GM10248 (cell line): ENCODE measurements at regions of chr12 and their contacts with region 1.

Region 1: GRCh38 chr12:54439521-54440255 is 20.6 kb upstream of the ITGA5 start:
- DNase-seq: peak; percentile 70
- CTCF ChIP-seq: peak; percentile 72

Region 2: DNA sequence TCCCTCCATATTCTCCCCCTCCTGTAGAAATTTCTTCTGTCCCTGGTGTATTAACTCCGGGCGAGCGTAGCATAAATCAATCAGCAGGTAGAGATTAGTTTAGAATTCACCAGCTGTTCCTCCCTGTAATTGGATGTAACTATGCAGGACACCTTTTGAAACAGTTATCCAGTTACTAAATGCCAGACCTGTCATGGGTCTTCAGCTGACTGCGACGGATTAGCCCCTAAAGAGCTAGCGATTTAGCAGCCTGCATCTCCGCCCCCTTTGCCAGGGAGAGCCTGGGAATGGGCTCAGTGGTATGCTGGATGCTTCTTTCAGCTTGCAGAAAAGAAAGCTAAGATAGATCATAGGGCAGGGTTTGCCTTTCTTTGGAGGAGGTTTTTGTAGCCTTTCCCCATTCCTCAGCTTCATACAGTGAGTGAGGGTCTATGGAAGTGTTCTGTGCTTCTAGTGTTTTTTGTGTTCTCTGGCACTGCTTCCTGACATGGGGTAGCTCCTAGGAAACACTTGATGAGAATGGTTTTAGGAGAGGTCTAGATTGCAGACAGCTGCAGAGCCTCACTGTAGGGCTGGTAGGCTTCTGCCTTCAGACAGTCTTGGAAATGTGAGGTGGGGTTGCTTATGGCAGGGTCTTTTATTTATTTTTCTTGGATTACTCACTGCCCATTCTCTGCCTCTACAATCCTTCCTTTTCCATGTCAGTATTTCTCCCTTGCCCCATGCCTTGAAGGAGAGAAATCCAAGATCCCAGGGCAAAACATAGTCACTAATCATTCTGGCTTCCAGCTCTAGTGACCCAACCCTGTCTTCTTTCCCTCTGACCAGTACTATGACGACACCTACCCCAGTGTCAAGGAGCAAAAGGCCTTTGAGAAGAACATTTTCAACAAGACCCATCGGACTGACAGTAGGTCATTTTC is 98.0 kb before region 1 on chr12:
- CTCF ChIA-PET with region 1: no interaction called
- POLR2A ChIA-PET with region 1: no interaction called
- DNase-seq: no peak
- CTCF ChIP-seq: no peak

Region 3: DNA sequence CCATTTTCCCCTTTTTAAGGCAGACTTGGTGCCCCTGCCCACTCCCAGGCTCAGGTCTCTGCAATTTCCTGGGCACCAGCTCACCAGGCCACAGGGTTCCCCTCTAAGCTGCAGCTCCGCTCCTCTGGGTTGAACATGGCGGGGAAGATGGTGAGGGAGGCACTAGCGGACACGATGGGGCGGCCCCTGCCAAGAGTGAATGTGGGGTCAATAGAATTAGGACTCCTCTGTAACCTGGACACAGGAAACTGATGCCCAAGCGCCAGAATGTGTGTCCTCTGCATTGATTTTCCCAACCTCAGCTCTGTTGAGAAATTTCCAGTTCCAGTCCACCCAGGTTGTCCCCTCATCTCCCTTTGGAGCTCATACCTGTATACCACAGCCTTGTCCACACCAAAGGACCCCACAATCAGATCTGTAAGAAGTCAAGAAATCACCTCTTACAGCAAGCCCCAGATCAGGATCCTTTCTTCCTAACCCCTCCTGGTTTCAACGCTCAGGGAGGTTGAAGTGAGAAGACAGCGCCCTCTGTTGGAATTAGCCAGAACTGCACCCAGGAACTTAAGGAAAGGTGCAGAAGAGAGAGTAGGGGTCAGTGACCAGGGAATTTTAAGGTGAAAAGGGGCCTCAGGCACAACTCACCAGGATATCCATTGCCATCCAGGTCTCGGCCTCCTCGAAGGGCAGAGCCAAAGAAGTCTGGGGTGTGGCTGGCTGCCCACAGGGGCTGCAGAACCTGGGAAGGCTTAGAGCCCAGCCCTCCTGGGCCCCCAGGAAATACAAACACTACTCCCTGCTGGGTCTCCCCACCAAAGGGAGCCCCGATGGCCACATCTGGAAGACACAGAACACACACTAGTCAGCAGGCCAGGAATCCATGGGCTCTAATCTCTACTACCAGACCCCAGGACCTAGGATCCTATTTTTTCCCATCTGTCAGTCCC is 35.4 kb before region 1 on chr12:
- CTCF ChIA-PET with region 1: interaction called, 506 read pairs
- POLR2A ChIA-PET with region 1: no interaction called
- DNase-seq: peak; percentile 69
- CTCF ChIP-seq: peak; percentile 91

Region 4: GRCh38 chr12:54411391-54412241 is 28.1 kb before region 1 on chr12:
- CTCF ChIA-PET with region 1: interaction called, 506 read pairs
- POLR2A ChIA-PET with region 1: no interaction called
- DNase-seq: no peak
- CTCF ChIP-seq: no peak

Region 5: DNA sequence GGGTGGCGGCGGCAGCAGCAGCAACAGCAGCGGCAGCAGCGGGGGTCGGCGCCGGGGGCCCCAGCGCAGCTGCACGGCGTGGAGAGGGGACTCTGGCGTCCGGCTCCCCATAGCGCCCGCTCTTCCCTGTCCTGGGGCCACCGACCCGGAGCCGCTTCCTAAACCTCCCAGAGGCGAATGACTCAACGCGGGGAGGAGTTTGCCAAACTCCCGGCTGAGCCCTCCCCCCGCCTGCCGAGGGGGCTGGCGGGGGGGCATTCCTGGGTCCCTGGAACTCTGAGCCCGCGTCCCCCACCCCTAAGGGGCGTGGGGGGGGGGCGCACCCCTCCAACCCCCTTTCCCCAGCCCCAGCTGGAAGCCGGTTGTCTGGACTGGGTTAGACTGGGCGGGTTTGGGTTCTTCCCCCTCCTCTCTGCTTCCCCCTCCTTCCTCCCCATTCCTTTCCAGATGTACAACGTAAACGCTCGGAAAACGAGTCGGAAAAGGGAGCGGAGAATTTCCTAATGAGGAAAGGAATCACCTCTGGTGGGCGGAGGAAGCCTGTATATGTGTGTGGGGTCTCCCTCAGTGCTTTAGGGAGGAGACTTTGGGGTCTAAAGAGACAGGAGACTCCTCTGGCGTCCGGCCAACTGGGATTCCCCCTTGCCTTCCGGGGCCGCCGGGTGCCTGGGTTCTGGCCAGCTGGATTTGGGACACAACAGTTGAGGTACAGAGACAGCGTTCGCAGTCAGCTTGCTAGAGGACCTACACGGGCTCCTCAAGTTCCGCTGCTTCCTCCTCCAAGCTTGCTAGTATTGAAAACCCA is 20.4 kb before region 1 on chr12 and contains the start of gene ITGA5:
- CTCF ChIA-PET with region 1: interaction called, 77 read pairs
- POLR2A ChIA-PET with region 1: no interaction called
- DNase-seq: no peak
- CTCF ChIP-seq: no peak

Region 6: DNA sequence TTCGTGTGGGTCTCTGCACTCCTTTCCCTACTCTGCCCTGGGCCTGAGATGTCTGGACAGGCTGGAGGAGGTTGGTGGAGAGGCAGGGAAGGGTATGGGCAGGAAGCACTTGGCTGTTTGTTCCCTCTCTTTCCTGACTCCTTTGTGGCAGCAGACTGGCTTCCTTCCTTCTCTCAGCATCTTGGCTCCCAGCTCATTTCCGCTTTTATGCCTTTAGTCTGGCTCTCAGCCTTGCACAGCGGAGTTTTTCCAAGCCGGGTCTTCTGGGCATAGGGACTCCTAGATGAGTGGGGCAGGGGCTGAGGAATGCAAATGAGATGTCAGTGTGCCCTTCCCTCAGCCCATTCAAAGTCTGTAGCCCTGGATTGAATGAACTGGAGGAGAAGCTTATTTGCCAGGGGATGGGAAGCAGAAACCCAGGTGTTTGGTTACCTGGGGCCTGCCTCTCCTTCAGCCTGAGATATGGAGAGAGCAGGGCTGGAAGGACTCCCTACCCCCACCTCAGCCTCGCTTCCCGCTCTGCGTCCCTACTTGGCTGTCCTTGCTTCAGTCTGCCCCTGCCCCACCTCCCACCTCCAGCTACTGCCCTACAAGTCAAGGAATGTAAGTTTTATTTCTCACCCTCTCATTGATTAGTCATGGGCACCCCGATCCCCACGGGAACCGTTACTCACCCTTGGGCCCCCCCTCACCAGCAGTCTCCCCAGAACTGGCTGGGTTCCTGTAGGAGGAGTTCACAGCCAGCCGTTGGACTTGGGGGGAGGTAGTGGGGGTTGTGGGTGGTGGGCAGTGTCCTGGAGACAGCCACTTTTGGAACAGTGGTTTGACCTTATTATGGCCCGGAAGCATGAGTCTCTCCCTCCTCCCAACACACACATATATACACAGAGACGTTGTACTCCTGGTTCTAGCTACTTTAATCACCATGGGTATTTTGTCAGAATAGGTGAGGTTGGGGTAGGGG is 11.4 kb before region 1 on chr12:
- CTCF ChIA-PET with region 1: interaction called, 77 read pairs
- POLR2A ChIA-PET with region 1: no interaction called
- DNase-seq: no peak
- CTCF ChIP-seq: no peak